ENCODE measurements at regions of chr7 and their contacts with region 1.

Region 1: GRCh38 chr7:150898475-150899011 is 46.2 kb downstream of the AOC1 start:
- DNase-seq: peak; percentile 96

Region 2: DNA sequence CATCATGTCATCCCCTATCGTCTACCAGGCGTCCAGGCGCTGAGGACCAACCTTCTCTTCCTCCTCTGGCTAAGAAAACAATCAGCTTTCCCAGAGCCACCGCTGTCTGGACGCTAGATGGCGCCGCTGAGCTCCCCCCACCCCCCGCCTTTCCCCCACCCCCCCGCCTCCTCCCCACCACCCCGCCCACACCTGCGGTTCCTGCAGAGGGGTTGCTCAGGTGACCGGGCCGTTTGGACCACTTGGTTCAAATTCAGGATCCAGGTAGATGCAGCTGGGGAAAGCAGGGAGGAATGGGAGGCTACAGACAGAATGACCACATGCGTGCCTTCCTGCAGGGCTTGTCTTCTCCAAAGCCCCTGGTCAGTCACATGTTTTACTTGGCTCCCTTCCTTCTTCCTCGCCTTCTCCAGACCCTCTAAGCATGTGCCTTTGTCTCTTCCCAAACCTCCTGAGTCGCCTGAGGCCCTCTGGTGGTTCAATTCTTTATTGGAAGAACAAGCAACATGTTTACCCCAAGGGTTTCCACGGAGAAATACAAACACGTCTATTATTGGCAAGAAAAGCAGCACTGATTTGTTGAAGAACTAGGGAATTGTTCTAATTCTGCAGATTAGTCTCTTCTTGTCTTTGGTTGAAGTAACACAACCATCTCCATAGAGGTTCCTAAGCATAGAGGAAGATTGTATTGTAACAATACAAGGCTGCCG is 21.6 kb before region 1 on chr7:
- CTCF ChIA-PET with region 1: interaction called, 10 read pairs
- POLR2A ChIA-PET with region 1: no interaction called
- DNase-seq: peak; percentile 93

Region 3: GRCh38 chr7:150917969-150918368 is 19.4 kb after region 1 on chr7:
- CTCF ChIA-PET with region 1: interaction called, 13 read pairs
- POLR2A ChIA-PET with region 1: no interaction called
- DNase-seq: no peak

Region 4: DNA sequence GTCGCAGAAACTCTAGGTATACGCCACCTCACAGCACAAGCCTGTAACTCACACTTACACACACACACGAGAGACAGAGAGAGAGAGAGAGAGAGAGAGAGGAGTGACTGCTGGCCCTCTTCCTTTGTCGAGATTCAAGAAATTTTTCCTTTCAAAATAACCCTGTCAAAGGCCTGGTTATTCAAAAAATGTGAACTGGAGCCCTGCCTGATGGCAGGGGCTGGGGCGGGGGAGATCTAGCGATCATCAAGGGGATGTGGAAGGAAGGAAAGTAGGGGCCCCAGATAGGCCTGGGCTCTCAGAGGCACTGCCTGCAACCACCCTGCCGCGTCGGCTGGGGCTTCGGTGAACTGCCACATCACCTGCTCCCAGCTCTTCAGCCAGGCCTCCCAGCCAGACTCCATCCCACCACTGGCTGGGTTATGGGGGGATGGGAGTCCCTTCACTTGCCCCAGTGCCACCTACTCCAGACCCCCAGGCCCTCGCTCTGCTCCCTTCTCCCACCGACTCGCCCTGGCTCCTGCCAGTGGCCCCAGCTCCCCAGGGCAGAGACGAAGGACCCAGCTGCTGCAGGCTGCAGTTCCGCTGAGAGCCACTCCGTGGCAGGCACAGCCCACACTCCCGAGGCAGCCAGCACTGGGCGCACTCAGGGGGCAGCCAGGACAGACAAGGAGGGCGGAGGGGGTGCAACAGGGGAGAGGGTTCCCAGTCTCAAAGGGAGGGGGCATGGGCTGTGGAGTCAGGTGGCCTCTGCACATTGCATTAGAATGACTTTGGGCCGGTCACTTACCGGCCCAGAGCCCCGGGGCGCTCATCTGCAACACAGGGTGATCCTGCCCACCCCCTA is 64.2 kb after region 1 on chr7:
- CTCF ChIA-PET with region 1: interaction called, 10 read pairs
- POLR2A ChIA-PET with region 1: no interaction called
- DNase-seq: peak; percentile 92

Region 5: DNA sequence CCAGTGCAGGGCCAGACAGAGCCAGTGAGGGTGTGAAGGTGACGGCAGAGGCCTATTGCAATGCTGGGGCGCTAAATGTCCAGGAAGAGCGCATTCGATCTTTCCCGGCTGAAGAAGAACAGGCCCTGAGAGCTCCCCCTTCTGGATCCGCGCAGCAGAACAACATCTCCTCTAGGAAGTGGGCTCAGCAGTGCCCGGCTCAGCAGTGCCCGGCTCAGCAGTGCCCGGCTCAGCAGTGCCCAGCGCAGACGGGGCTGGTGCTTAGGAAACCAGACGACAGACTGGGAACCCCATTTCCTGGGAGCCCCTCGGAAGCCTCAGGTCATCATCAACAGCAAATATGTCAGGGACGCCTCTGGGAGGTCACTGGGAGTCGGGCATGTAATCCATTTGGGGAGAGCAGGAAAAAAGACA is 87.6 kb after region 1 on chr7:
- CTCF ChIA-PET with region 1: interaction called, 11 read pairs
- POLR2A ChIA-PET with region 1: no interaction called
- DNase-seq: peak; percentile 76

Region 6: DNA sequence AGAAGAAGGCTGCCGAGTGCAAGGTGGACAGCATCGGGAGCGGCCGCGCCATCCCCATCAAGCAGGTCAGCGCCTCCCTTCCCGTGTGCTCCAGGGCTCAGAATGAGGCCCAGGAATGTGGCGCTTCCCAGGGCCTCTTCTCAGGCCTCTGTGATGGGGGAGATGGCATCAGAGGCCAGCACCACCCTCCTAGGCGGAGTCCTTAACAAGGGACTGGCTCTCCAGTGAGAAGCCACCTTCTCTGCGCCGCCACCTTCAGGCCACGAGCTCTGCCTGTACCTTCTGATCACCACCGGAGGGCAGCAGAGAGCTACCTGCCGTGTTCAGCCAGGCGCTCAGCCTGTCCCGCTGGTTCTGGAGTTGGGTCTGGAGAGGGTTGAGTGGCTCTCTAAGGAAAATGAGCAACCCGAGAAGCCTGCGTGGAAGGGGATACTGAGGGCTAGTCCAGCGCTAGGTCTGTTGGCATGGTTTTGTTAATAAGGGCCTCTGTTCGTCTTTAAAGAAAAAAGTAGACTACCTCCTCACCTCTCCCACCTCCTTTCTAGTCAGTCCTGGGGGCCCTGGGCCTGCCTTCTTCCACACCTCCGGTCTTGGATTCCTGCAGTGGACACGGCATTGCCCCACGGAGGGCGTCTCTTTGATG is 225.4 kb after region 1 on chr7:
- CTCF ChIA-PET with region 1: no interaction called
- POLR2A ChIA-PET with region 1: no interaction called
- DNase-seq: peak; percentile 99

Measured in HEK293T (cell line).